Upper lobe of right lung (tissue), 1 donor: ENCODE measurements at regions of chr12 and their contacts with region 1.

Region 1: GRCh38 chr12:68080577-68080976 is 79.0 kb downstream of the IFNG start:
- DNase-seq: no peak
- ATAC-seq: no peak
- H3K4me3 ChIP-seq: no peak overlapping the region
- H3K27ac ChIP-seq: no peak overlapping the region
- H3K4me1 ChIP-seq: no peaks in the 10 kb centered on the region
- H3K27me3 ChIP-seq: no peaks in the 10 kb centered on the region
- CTCF ChIP-seq: no peak

Region 2: DNA sequence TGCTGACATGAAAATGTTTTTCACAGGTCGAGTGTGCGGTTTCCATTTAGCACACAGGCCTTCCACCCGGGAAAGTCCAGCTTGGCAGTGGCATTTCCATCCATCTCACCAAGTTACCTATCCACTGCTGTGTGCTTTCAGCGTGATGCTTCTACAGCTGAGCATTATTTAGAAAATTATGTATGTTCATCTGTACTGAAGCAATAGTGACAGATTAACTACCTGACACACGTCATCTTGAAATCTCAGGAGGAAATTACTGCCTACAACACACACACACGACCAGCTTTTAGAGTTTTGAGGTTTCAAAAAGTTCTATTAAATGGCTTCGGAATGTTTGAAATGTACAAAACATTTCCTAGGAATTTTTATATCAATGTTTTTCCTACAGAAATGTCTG is 51.9 kb before region 1 on chr12:
- intact Hi-C with region 1: loop called (anchors 2 kb)
- DNase-seq: no peak
- ATAC-seq: no peak
- H3K4me3 ChIP-seq: no peak overlapping the region
- H3K27ac ChIP-seq: no peak overlapping the region
- H3K4me1 ChIP-seq: no peaks in the 10 kb centered on the region
- H3K27me3 ChIP-seq: no peaks in the 10 kb centered on the region
- CTCF ChIP-seq: no peak

Region 3: DNA sequence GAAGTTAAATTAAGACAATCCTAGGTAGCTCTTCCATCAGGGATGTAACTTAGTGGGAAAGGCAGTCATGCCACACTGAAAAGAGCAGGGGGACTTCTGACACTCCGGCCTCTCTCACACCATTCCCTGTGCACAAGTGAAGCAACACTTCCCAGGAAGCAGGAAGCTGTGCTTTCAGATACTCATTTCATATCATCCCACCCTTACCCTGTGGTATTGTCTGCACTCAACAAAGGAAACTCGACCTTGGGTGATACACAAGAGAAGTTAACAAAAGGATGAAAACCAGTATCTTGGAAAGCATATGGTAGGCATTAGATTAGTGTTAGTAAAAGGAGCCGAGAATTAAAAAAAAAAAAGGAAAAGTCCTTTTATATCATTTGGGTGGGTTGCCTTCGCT is 312.8 kb after region 1 on chr12:
- intact Hi-C with region 1: no loop called
- DNase-seq: no peak
- ATAC-seq: peak; percentile 40
- H3K4me3 ChIP-seq: no peak overlapping the region
- H3K27ac ChIP-seq: no peak overlapping the region
- H3K4me1 ChIP-seq: no peaks in the 10 kb centered on the region
- H3K27me3 ChIP-seq: no peaks in the 10 kb centered on the region
- CTCF ChIP-seq: no peak